Activated CD4-positive, alpha-beta T cell treated with anti-CD3 and anti-CD28 coated beads, Interleukin-2, amount 10 ng/mL, durations not matched to agents 7 days and 5 days (primary cell): ENCODE measurements at regions of chr5 and their contacts with region 1.

Region 1: GRCh38 chr5:140321796-140322195 is 18.9 kb upstream of the PFDN1 start:
- DNase-seq: no peak
- H3K4me3 Mint-ChIP-seq: no peak overlapping the region
- H3K27ac Mint-ChIP-seq: no peak overlapping the region
- H3K4me1 Mint-ChIP-seq: no peaks in the 10 kb centered on the region
- H3K27me3 Mint-ChIP-seq: peaks cover 5% of the 10 kb centered on the region

Region 2: GRCh38 chr5:140336388-140336787 is 14.6 kb after region 1 on chr5:
- CTCF ChIA-PET with region 1: interaction called, 14 read pairs
- POLR2A ChIA-PET with region 1: no interaction called
- DNase-seq: no peak
- H3K4me3 Mint-ChIP-seq: no peak overlapping the region
- H3K27ac Mint-ChIP-seq: peak overlapping the region; percentile 17
- H3K4me1 Mint-ChIP-seq: peaks cover 46% of the 10 kb centered on the region
- H3K27me3 Mint-ChIP-seq: no peaks in the 10 kb centered on the region

Region 3: GRCh38 chr5:140357726-140358093 is 35.9 kb after region 1 on chr5:
- CTCF ChIA-PET with region 1: no interaction called
- POLR2A ChIA-PET with region 1: no interaction called
- DNase-seq: peak; percentile 80
- H3K4me3 Mint-ChIP-seq: peak overlapping the region; percentile 69
- H3K27ac Mint-ChIP-seq: peak overlapping the region; percentile 80
- H3K4me1 Mint-ChIP-seq: peaks cover 11% of the 10 kb centered on the region
- H3K27me3 Mint-ChIP-seq: peaks cover 7% of the 10 kb centered on the region